Mammary epithelial cell (primary cell): ENCODE measurements at regions of chr11 and their contacts with region 1.

Region 1: GRCh38 chr11:72722050-72722748 is 30.0 kb downstream of the ARAP1 start:
- DNase-seq: peak; percentile 84
- H3K4me3 ChIP-seq: peak overlapping the region; percentile 49 to 61 (median 58)
- H3K27ac ChIP-seq: peak overlapping the region; percentile 55
- H3K4me1 ChIP-seq: peaks cover 44% of the 10 kb centered on the region
- H3K27me3 ChIP-seq: no peaks in the 10 kb centered on the region
- CTCF ChIP-seq: no peak

Region 2: DNA sequence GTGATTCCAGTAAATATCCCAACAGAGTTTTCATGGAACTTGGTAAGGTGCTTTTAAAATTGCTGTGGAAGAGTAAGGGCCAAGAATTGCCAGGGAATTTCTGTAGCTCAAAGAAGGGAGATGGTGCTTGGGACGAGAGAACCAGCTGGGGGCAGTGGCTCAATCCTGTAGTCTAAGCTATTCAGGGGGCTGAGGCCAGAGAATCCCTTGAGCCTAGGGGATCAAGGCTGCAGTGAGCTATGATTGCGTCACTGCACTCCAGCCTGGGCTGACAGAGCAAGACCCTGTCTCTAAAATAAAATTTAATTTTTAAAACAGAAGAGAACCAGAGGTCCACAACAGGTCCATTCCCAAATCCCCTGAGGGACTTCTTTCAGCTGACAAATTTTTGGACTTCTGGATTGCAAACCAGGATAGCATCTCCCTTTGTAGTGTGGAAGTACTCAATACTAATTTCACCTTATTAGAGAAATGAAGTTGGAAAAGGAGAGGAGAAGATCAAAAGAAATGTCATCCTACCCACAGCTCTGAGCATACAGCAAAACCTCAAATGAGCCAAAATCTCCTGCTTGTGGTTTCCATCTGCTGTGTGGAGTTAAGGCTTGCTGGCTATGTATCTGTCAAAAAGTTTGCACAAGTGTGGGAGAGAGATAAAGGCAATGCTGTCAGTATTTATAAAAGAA is 228.6 kb before region 1 on chr11:
- CTCF ChIA-PET with region 1: no interaction called
- dilution Hi-C with region 1: no loop called
- in situ Hi-C with region 1: no loop called
- intact Hi-C with region 1: no loop called
- DNase-seq: no peak
- H3K4me3 ChIP-seq: no peak overlapping the region
- H3K27ac ChIP-seq: no peak overlapping the region
- H3K4me1 ChIP-seq: no peaks in the 10 kb centered on the region
- H3K27me3 ChIP-seq: no peaks in the 10 kb centered on the region
- CTCF ChIP-seq: no peak

Region 3: DNA sequence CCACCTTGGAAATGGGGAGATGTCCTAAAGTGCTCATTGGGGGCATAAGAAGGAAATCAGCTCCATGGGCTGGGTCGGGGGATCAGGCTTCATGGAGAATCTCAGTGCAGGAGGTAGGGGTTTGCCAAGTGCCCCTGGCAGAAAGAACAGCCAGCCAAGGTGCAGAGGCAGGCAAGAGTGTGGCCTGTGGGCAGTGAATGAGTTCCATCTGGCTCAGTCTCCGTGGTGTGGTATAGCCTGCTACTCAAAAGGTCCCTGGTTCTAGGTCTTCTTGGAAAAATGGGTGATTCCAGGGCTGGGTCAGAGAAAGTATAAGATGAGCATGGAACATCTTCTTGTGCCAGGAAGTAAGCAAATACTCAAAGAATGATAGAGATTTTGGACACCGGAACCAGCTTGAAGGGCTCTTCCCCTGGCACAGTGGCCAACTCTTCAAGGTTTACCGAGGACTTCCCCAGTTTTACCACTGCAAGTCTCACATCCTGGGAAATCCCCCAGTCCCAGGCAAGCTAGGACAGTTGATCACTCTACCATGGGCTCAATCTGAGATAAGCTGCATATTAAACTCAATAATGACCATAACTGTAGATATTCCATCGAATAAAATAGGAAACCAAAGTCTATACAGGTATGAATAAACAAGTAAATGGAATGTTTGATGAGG is 40.6 kb after region 1 on chr11:
- CTCF ChIA-PET with region 1: no interaction called
- dilution Hi-C with region 1: no loop called
- in situ Hi-C with region 1: no loop called
- intact Hi-C with region 1: no loop called
- DNase-seq: peak; percentile 31
- H3K4me3 ChIP-seq: no peak overlapping the region
- H3K27ac ChIP-seq: no peak overlapping the region
- H3K4me1 ChIP-seq: no peaks in the 10 kb centered on the region
- H3K27me3 ChIP-seq: no peaks in the 10 kb centered on the region
- CTCF ChIP-seq: no peak

Region 4: DNA sequence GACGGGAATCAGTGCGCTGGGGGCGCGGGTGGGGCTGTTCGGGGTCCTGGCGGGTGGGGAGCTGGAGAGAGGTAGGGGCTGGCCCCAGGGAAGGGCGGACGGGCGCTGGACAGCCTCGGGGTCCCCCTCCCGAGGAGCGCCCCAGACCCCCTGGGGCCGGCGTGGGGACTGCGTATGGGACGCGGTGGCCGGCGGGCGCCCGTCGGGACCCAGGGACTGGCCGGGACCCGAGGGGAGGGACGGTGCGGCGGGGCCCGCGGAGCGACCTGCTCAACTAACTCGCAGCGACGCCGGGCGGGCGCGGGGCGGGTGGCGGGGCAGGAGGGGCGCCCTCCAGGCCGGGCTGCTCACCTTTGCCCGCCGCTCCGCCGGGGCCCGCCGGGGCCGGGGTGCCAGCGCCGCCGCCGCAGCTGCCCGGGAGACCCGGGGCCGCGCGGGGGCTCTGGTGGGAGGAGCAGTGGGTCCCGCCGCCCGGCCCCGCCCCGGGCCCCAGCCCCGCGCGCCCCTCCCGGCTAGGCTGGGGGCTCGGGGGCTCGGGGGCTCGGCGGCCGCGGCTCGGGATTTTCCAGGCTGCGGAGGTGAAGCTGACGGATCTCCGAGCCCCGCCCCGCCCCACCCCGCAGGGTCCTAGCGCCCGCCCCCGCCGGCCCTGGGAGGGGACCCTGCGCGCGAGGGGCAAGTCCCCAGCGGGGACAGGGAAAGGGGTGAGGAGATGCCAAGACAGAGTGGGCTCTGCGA is 59.3 kb after region 1 on chr11:
- CTCF ChIA-PET with region 1: interaction called, 17 read pairs
- dilution Hi-C with region 1: no loop called
- in situ Hi-C with region 1: no loop called
- intact Hi-C with region 1: no loop called
- DNase-seq: no peak
- H3K4me3 ChIP-seq: peak overlapping the region; percentile 39 to 66 (median 49)
- H3K27ac ChIP-seq: no peak overlapping the region
- H3K4me1 ChIP-seq: peaks cover 18% of the 10 kb centered on the region
- H3K27me3 ChIP-seq: no peaks in the 10 kb centered on the region
- CTCF ChIP-seq: no peak

Region 5: DNA sequence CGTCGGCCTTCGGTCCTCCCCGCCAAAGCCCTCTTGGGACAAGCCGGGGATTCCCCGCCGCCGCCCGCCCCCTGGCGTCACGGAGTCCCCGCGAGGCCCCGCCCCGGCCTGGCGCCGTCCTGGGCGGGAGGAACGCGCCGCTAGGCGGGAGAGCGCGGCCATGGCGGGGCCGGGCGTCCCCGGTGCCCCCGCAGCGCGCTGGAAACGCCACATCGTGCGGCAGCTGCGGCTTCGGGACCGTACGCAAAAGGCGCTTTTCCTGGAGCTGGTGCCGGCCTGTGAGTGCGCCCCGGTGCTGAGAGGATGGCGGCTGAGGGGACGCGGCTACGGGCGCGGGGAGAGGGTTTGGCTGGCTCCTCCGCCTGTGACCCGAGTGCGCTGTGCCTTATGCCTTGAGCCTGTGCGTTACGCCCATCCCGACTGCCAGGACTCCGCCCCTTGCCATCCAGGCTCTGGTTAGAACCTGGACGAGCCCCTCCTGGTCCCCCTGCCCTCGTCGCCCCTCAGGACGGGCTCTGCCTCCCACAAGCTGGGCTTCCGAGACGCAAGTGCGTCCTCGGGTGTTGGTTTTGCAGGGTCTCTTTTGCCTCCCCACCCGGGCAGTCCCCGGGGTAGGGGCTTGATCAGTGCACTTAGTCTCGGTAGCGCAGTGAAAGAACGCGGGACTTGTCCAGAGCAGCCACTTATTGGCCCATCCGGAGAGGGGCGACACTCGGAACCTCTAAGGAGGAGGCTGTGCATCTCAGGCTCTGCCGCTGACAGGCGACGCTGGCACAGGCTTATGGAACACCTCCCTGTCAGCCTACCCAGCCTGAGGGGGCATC is 92.3 kb after region 1 on chr11 and contains the start of gene ATG16L2:
- CTCF ChIA-PET with region 1: no interaction called
- dilution Hi-C with region 1: no loop called
- in situ Hi-C with region 1: no loop called
- intact Hi-C with region 1: loop called (anchors 1 kb)
- DNase-seq: peak; percentile 89
- H3K4me3 ChIP-seq: peak within 1 kb of the TSS; percentile 46 to 72 (median 58)
- H3K27ac ChIP-seq: peak within 1 kb of the TSS; percentile 88
- H3K4me1 ChIP-seq: peaks cover 22% of the 10 kb centered on the region
- H3K27me3 ChIP-seq: no peaks in the 10 kb centered on the region
- CTCF ChIP-seq: peak in 1 of 2 donors; percentile 35
- total RNA-seq, gene ATG16L2: 3.3 to 23.0 TPM

Region 6: GRCh38 chr11:72848846-72849466 is 126.8 kb after region 1 on chr11:
- CTCF ChIA-PET with region 1: no interaction called
- dilution Hi-C with region 1: no loop called
- in situ Hi-C with region 1: no loop called
- intact Hi-C with region 1: loop called (anchors 1 kb)
- DNase-seq: peak; percentile 22
- H3K4me3 ChIP-seq: no peak overlapping the region
- H3K27ac ChIP-seq: no peak overlapping the region
- H3K4me1 ChIP-seq: no peaks in the 10 kb centered on the region
- H3K27me3 ChIP-seq: no peaks in the 10 kb centered on the region
- CTCF ChIP-seq: peak; percentile 68 to 83

Region 7: DNA sequence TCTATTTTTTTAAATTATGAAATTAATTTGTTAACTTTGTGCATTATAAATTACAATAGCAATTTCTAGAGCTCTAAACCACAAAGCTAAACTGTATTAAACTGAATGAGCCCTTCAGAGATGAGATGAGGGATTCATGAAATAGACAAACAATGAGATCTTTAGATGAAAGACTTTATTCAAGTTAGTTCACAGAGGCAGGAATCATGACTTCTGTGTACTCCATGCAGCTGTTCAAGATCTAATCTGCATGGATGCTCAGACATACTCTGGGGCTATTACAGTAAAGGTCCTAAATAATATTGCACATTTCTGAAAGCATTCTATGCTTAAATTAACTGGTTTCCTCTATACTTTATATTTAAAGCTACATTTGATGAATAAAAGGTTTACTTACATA is 297.2 kb after region 1 on chr11:
- CTCF ChIA-PET with region 1: no interaction called
- dilution Hi-C with region 1: no loop called
- in situ Hi-C with region 1: no loop called
- intact Hi-C with region 1: no loop called
- DNase-seq: no peak
- H3K4me3 ChIP-seq: no peak overlapping the region
- H3K27ac ChIP-seq: no peak overlapping the region
- H3K4me1 ChIP-seq: no peaks in the 10 kb centered on the region
- H3K27me3 ChIP-seq: no peaks in the 10 kb centered on the region
- CTCF ChIP-seq: no peak

Region 8: GRCh38 chr11:73184953-73185671 is 462.9 kb after region 1 on chr11:
- CTCF ChIA-PET with region 1: interaction called, 5 read pairs
- dilution Hi-C with region 1: no loop called
- in situ Hi-C with region 1: loop called in 1 of 2 experiments (anchors 10 kb)
- intact Hi-C with region 1: no loop called
- DNase-seq: peak; percentile 77
- H3K4me3 ChIP-seq: peak overlapping the region in 1 of 3 experiments; percentile 3
- H3K27ac ChIP-seq: peak overlapping the region; percentile 60
- H3K4me1 ChIP-seq: peaks cover 38% of the 10 kb centered on the region
- H3K27me3 ChIP-seq: no peaks in the 10 kb centered on the region
- CTCF ChIP-seq: peak; percentile 99 to 100

Region 9: DNA sequence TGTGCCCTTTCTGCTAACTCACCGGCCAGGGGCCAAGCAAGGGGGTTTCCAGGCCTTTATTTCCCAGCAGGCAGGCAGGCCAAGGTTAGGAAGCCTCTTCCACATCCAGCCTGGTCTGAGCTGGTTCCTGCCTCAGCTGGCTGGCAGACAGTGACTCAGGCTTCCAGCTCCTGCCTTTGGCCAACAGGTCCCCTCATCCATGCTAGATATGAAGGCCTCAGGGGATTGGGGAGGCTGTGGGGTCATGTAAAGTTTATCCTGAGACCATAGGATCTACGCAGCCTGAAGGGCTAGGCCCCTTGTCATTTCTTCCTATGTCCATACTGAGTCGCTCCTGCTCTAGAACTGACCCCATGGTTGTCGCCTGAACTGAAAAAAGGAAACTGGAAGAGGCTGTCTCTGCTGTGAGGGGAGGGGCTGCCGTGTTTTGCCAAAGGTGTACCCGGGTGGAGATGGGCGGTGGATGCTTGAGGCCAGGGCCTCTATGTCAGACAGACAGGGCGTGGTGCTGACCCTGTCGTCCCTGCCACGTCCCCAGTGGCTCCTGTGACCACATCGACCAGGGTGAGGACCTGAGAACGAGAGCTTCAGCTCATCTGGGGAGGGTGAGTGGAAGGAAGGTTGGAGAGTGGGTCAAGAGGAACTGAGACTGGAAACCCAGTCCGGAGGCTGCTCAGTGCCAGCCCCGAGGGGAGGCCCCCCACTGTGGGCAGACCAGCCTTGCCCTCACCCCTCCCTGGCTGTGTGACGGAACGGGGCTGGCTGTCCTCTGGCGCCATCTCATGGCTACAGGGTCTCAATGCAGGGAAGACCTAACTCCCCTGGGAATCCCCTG is 566.9 kb after region 1 on chr11:
- CTCF ChIA-PET with region 1: no interaction called
- dilution Hi-C with region 1: no loop called
- in situ Hi-C with region 1: no loop called
- intact Hi-C with region 1: loop called (anchors 1 kb)
- DNase-seq: peak; percentile 87
- H3K4me3 ChIP-seq: no peak overlapping the region
- H3K27ac ChIP-seq: peak overlapping the region; percentile 30
- H3K4me1 ChIP-seq: peaks cover 15% of the 10 kb centered on the region
- H3K27me3 ChIP-seq: no peaks in the 10 kb centered on the region
- CTCF ChIP-seq: peak; percentile 81 to 98